Posterior vena cava (tissue), 2 donors: ENCODE measurements at regions of chr2 and their contacts with region 1.

Region 1: GRCh38 chr2:10028988-10029874 is 14.1 kb upstream of the KLF11 start:
- DNase-seq: peak; percentile 91

Region 2: DNA sequence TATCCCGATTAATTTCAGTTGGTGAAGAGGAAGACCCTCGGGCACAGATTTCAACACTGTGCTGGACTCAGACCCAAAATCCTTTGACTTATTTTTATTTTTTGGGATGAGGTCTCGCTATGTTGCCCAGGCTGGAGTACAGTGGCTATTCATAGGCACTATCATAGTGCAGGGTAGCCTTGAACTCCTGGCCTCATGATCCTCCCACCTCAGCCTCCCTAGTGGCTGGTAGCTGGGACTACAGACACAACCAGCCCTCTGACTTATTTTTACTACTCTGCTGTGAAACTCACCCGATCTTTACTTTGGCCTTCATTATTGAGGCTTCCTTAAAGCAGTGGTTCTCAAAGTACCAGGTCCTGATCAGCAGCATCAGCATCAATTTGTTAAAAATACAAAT is 455.4 kb before region 1 on chr2:
- intact Hi-C with region 1: loop called in 1 of 2 experiments (anchors 10 kb)
- DNase-seq: no peak

Region 3: GRCh38 chr2:9877733-9878125 is 151.5 kb before region 1 on chr2:
- intact Hi-C with region 1: no loop called
- DNase-seq: no peak

Region 4: GRCh38 chr2:9993488-9994165 is 35.6 kb before region 1 on chr2:
- intact Hi-C with region 1: no loop called
- DNase-seq: no peak